ENCODE measurements at regions of chr6 and their contacts with region 1.

Region 1: GRCh38 chr6:160766989-160767660 is 65.1 kb downstream of the PLG start:
- DNase-seq: peak; percentile 87
- H3K4me3 ChIP-seq: peak overlapping the region; percentile 30 to 57 (median 53)
- H3K27ac ChIP-seq: peak overlapping the region in 1 of 4 donors; percentile 41
- H3K4me1 ChIP-seq: peaks cover 0 to 13% (median 8%) of the 10 kb centered on the region in 4 donors
- H3K27me3 ChIP-seq: no peaks in the 10 kb centered on the region
- CTCF ChIP-seq: peak in 3 of 4 experiments; percentile 46 to 84 (median 59)
- EP300 ChIP-seq: no peak
- POLR2A ChIP-seq: no peak

Region 2: GRCh38 chr6:160520043-160520904 is 246.9 kb before region 1 on chr6:
- intact Hi-C with region 1: loop called (anchors 5 kb)
- DNase-seq: peak; percentile 86
- H3K4me3 ChIP-seq: peak overlapping the region; percentile 68 to 81 (median 76)
- H3K27ac ChIP-seq: peak overlapping the region; percentile 82 to 88 (median 83)
- H3K4me1 ChIP-seq: peaks cover 0 to 11% (median 5%) of the 10 kb centered on the region in 4 donors
- H3K27me3 ChIP-seq: no peaks in the 10 kb centered on the region
- CTCF ChIP-seq: peak in 2 of 4 experiments; percentile 1 to 84
- EP300 ChIP-seq: no peak
- POLR2A ChIP-seq: no peak

Region 3: DNA sequence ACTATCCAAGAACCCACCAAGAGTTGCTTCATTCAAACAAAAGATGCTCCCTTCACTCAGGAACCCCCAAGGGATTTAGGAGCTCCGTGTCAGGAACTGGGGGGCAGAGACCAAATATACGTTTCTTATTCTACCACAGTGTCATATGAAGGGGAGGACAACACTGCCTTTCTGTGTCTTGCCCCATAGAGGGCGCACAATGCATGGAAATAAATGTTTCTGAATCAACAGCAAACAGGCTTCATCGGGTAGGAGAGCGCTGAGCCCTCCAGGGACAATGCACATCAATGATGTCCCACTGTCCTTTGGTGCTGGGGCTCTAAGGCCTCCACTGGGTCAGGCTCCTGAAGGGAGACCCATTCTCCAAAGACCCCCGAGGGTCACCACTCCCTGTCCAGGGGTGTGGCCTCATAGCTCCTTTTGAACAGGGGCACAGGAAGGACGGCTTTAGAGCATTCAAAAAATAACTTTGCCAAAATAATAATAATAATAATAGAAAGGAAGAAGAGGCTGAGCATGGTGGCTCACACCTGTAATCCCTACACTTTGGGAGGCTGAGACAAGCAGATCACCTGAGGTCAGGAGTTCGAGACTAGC is 34.0 kb before region 1 on chr6:
- intact Hi-C with region 1: loop called (anchors 2 kb)
- DNase-seq: no peak
- H3K4me3 ChIP-seq: no peak overlapping the region
- H3K27ac ChIP-seq: no peak overlapping the region
- H3K4me1 ChIP-seq: no peaks in the 10 kb centered on the region
- H3K27me3 ChIP-seq: no peaks in the 10 kb centered on the region
- CTCF ChIP-seq: peak; percentile 21 to 44 (median 40)
- EP300 ChIP-seq: no peak
- POLR2A ChIP-seq: no peak

Region 4: DNA sequence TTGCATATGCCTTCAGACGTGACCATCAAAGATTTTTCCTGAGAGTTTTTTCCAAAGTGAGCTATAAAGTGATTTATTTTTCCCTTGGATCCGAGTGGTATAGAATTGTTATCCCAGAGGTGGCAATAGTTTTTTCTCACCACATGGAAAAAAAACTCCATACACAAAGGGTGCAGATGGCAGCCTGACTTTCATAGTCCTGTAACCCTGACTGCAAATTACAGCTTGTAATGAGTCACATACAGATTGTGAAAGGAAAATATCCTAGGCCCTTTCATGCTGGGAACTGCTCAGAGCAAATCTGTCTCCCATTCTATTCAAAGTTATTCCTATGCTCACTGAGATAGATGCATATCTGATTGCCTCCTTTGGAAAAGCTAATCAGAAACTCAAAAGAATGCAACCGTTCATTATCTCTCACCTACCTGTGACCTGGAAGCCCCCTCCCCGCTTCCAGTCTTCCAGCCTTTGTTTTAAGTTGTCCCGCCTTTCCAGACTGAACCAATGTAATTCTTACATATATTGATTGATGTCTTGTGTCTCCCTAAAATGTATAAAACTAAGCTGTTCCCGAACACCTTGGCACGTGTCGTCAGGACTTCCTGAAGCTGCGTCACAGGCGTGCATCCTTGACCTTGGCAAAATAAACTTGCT is 115.7 kb after region 1 on chr6:
- intact Hi-C with region 1: no loop called
- DNase-seq: no peak
- H3K4me3 ChIP-seq: no peak overlapping the region
- H3K27ac ChIP-seq: no peak overlapping the region
- H3K4me1 ChIP-seq: no peaks in the 10 kb centered on the region
- H3K27me3 ChIP-seq: no peaks in the 10 kb centered on the region
- CTCF ChIP-seq: no peak
- EP300 ChIP-seq: no peak
- POLR2A ChIP-seq: no peak

Region 5: GRCh38 chr6:161011492-161012480 is 244.7 kb after region 1 on chr6:
- intact Hi-C with region 1: no loop called
- DNase-seq: no peak
- H3K4me3 ChIP-seq: no peak overlapping the region
- H3K27ac ChIP-seq: peak overlapping the region in 2 of 4 donors; percentile 56 to 68
- H3K4me1 ChIP-seq: peaks cover 0 to 45% (median 34%) of the 10 kb centered on the region in 4 donors
- H3K27me3 ChIP-seq: no peaks in the 10 kb centered on the region
- CTCF ChIP-seq: no peak
- EP300 ChIP-seq: no peak
- POLR2A ChIP-seq: no peak

Measured in sigmoid colon (tissue), 7 donors.